H1 (cell line): ENCODE measurements at regions of chr2 and their contacts with region 1.

Region 1: GRCh38 chr2:126399001-126399400 is 257.0 kb upstream of the GYPC start:
- DNase-seq: no peak
- H3K4me3 ChIP-seq: no peak overlapping the region
- H3K27ac ChIP-seq: no peak overlapping the region
- H3K4me1 ChIP-seq: no peaks in the 10 kb centered on the region
- H3K27me3 ChIP-seq: no peaks in the 10 kb centered on the region
- CTCF ChIP-seq: peak in 2 of 3 experiments; percentile 27 to 43; a peak in 3 of 4 replicates
- EP300 ChIP-seq: no peak
- POLR2A ChIP-seq: no peak
- RAD21 ChIP-seq: peak; percentile 14 to 42; a peak in 3 of 4 replicates

Region 2: DNA sequence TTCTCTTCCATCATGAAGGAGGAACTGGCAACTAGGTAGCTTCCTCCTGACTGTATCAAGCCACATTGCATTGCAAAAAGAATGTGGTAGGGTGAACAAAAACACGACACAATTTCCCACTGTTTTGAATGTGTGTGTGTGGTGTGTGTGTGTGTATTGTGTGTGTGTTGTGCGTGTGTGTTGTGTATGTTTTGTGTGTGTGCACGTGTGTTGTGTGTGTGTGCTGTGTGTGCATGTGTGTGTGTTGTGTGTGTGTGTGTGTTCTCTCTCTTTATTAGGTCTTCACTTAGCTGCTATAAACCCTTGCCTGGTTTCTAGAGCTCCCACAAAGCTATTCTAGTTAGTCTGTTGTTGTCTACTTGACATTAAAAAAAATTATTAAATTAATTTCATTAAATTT is 293.0 kb before region 1 on chr2:
- CTCF ChIA-PET with region 1: no interaction called
- POLR2A ChIA-PET with region 1: no interaction called
- DNase-seq: no peak
- H3K4me3 ChIP-seq: no peak overlapping the region
- H3K27ac ChIP-seq: no peak overlapping the region
- H3K4me1 ChIP-seq: no peaks in the 10 kb centered on the region
- H3K27me3 ChIP-seq: no peaks in the 10 kb centered on the region
- CTCF ChIP-seq: no peak
- EP300 ChIP-seq: no peak
- POLR2A ChIP-seq: no peak
- RAD21 ChIP-seq: no peak

Region 3: GRCh38 chr2:126409850-126410249 is 10.8 kb after region 1 on chr2:
- CTCF ChIA-PET with region 1: interaction called, 15 read pairs
- POLR2A ChIA-PET with region 1: no interaction called
- DNase-seq: no peak
- H3K4me3 ChIP-seq: no peak overlapping the region
- H3K27ac ChIP-seq: no peak overlapping the region
- H3K4me1 ChIP-seq: no peaks in the 10 kb centered on the region
- H3K27me3 ChIP-seq: no peaks in the 10 kb centered on the region
- CTCF ChIP-seq: no peak
- EP300 ChIP-seq: no peak
- POLR2A ChIP-seq: no peak
- RAD21 ChIP-seq: no peak

Region 4: GRCh38 chr2:126463892-126464674 is 65.1 kb after region 1 on chr2:
- CTCF ChIA-PET with region 1: interaction called, 10 read pairs
- POLR2A ChIA-PET with region 1: no interaction called
- DNase-seq: no peak
- H3K4me3 ChIP-seq: no peak overlapping the region
- H3K27ac ChIP-seq: no peak overlapping the region
- H3K4me1 ChIP-seq: no peaks in the 10 kb centered on the region
- H3K27me3 ChIP-seq: no peaks in the 10 kb centered on the region
- CTCF ChIP-seq: no peak
- EP300 ChIP-seq: no peak
- POLR2A ChIP-seq: no peak
- RAD21 ChIP-seq: no peak